Naive thymus-derived CD8-positive, alpha-beta T cell (primary cell): ENCODE measurements at regions of chr21 and their contacts with region 1.

Region 1: DNA sequence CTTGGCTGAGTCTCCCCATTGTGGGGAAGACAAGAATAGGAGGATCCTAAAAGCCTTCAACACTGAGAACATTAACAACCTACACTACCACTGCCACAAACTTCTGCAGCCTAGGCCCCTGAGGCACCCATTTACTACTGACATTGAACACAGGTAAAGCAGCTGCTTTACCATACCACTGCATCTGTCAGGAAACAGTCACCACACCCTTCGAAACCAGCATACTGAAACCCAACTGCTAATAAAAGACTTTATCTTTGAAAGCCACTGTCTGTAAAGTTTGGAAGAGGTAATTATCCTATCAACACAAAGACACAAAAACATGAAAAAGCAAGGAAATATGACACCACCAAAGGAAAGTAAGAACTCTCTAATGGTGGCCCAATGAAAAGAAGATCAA is 7.4 kb downstream of the IFNAR1 start:
- DNase-seq: no peak
- ATAC-seq: peak in 1 of 2 donors; percentile 49
- H3K4me3 Mint-ChIP-seq: peak overlapping the region in 8 of 10 donors; percentile 2 to 74 (median 40)
- H3K27ac Mint-ChIP-seq: peak overlapping the region in 8 of 10 donors; percentile 38 to 75 (median 58)
- H3K4me1 Mint-ChIP-seq: peaks cover 26 to 74% (median 64%) of the 10 kb centered on the region in 4 donors
- H3K27me3 Mint-ChIP-seq: no peaks in the 10 kb centered on the region

Region 2: DNA sequence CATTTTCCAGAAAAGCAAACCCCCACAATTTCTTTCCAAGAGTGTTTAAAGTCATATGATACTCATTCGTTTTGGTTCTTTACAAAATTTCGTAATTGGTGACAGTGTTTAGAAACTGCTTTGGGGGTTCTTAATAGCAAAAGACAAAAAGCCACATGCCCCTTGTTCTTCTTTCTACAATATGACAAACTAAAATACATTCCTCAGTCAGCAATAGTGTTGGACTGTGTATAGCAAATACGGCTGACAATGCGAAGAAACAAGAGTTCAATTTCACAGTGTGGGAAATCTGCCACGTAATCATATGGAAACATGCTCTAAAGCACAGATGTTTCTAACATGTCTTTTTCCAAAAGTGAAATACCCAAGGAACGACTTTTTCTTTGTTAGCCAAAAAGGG is 15.0 kb before region 1 on chr21:
- POLR2A ChIA-PET with region 1: interaction called, 11 read pairs
- DNase-seq: no peak
- ATAC-seq: no peak
- H3K4me3 Mint-ChIP-seq: no peak overlapping the region
- H3K27ac Mint-ChIP-seq: no peak overlapping the region
- H3K4me1 Mint-ChIP-seq: peaks cover 0 to 3% (median 0%) of the 10 kb centered on the region in 4 donors
- H3K27me3 Mint-ChIP-seq: peaks cover 0 to 2% (median 0%) of the 10 kb centered on the region in 5 donors